Left cardiac atrium (tissue), 4 donors: ENCODE measurements at regions of chr1 and their contacts with region 1.

Region 1: GRCh38 chr1:147389532-147390524 is 147.3 kb downstream of the CHD1L start:
- DNase-seq: no peak
- ATAC-seq: peak in 1 of 2 donors; percentile 53

Region 2: DNA sequence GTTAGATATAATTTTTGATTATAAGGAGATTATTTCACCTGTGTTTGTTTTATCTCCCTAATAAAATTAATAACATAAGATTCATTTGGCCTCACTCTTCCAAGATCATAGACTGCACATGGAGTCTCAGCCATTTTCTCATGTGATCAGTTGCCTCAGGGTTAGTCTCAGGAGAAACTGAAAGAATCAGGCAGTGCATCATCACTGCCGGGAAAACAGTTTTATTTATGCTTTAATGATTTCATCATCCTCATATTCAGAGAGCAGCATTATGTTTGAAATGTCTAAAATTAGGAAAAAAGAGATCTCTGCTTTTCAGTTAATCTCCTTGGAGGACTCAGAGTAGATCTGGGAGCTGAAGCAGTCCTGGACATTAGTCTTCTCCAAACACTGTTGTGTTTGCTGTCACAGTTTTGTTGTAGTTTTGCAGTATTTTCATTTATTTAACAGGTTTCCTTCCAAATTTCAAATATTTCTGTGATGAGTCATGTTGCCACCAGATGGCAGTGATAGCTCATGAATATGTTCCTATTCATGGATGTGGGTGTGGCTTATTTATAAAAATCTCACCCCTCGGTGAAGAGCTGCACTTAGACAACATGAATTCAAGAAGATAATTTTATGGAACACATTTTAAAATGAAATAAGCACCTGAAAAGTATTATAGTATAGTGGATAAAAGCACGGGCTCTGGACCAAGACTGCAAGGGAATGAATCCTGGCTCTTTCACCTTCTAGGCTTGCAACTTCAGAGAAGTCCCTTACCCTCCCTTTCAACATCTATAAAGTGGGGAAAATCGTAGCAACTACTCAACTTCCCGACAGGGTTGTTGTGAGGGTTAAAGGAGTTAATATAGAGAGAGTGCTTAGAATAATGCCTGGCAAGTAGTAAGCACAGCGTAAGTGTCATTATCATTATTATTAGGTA is 116.2 kb before region 1 on chr1:
- intact Hi-C with region 1: loop called (anchors 5 to 10 kb)
- DNase-seq: no peak
- ATAC-seq: peak; percentile 55 to 81

Region 3: GRCh38 chr1:147599362-147600118 is 209.7 kb after region 1 on chr1:
- intact Hi-C with region 1: no loop called
- DNase-seq: peak; percentile 99
- ATAC-seq: peak; percentile 93 to 96